ENCODE measurements at regions of chr22 and their contacts with region 1.

Region 1: GRCh38 chr22:40487663-40488249 is 117.4 kb downstream of the SGSM3 start:
- DNase-seq: peak; percentile 49
- H3K4me3 ChIP-seq: no peak overlapping the region
- H3K27ac ChIP-seq: no peak overlapping the region
- H3K4me1 ChIP-seq: peaks cover 6% of the 10 kb centered on the region
- H3K27me3 ChIP-seq: no peaks in the 10 kb centered on the region
- CTCF ChIP-seq: peak; percentile 54 to 58
- POLR2A ChIP-seq: no peak

Region 2: GRCh38 chr22:40473703-40474102 is 14.1 kb before region 1 on chr22:
- CTCF ChIA-PET with region 1: interaction called, 10 read pairs
- POLR2A ChIA-PET with region 1: no interaction called
- dilution Hi-C with region 1: no loop called
- intact Hi-C with region 1: no loop called
- DNase-seq: no peak
- H3K4me3 ChIP-seq: no peak overlapping the region
- H3K27ac ChIP-seq: no peak overlapping the region
- H3K4me1 ChIP-seq: no peaks in the 10 kb centered on the region
- H3K27me3 ChIP-seq: no peaks in the 10 kb centered on the region
- CTCF ChIP-seq: no peak
- POLR2A ChIP-seq: no peak

Region 3: GRCh38 chr22:40533712-40534378 is 46.1 kb after region 1 on chr22:
- CTCF ChIA-PET with region 1: no interaction called
- POLR2A ChIA-PET with region 1: no interaction called
- dilution Hi-C with region 1: no loop called
- intact Hi-C with region 1: no loop called
- DNase-seq: peak; percentile 52
- H3K4me3 ChIP-seq: no peak overlapping the region
- H3K27ac ChIP-seq: no peak overlapping the region
- H3K4me1 ChIP-seq: peaks cover 18% of the 10 kb centered on the region
- H3K27me3 ChIP-seq: no peaks in the 10 kb centered on the region
- CTCF ChIP-seq: no peak
- POLR2A ChIP-seq: no peak